ENCODE measurements at regions of chr5 and their contacts with region 1.

Region 1: GRCh38 chr5:138464008-138464387 is 1.3 kb upstream of the EGR1 start:
- DNase-seq: peak; percentile 91
- H3K4me3 Mint-ChIP-seq: peak overlapping the region; percentile 83
- H3K27ac Mint-ChIP-seq: peak overlapping the region; percentile 93
- H3K4me1 Mint-ChIP-seq: peaks cover 55% of the 10 kb centered on the region
- H3K27me3 Mint-ChIP-seq: peaks cover 6% of the 10 kb centered on the region

Region 2: DNA sequence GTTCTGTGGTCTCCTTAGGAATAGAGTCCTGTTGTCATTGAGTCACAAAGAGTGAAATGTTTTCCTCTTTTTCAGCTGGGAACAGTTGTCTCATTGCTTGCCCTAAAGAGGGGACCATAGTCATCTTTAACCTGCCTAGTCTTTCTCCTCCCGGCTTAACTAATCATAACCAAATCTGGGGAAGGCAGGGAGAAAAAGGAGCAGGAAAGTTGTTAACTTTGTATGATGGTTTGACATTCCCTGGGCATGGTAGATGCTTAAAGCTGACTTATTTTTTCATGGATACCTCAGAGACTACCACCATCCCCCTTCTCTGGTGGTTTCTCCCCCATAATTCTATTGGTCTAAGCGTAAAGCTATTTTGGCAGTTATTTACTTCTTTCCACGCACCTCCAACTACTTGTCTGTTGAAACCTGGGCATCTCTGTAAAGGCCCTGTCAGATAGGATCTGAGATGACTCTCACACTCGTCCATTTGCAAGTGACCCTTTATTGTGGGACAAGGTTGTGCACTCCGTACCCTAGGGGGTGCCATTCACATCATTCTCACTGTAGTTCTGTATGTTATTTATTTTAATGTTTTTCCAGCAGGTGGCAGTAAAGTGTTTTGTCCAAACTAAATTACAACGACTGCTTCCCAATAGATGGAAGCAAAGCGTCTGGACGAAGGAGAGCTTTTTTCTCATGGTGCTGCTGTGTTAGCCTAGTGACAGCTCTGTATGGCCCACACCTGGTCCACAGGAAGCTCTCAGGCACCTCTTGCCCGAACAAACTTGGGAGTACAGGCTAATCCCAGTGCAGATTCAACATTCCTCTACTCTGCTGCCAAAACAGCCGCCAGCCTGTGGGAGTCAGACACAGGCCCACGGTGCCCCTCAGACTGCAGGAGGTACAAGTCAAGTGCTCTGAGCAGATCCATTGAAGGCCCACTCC is 428.1 kb before region 1 on chr5:
- intact Hi-C with region 1: loop called (anchors 2 kb)
- DNase-seq: peak; percentile 60
- H3K4me3 Mint-ChIP-seq: peak overlapping the region; percentile 38
- H3K27ac Mint-ChIP-seq: peak overlapping the region; percentile 72
- H3K4me1 Mint-ChIP-seq: peaks cover 46% of the 10 kb centered on the region
- H3K27me3 Mint-ChIP-seq: no peaks in the 10 kb centered on the region

Region 3: GRCh38 chr5:138331449-138332368 is 132.3 kb before region 1 on chr5 and contains the start of gene CDC25C:
- intact Hi-C with region 1: loop called (anchors 1 kb)
- DNase-seq: peak; percentile 97
- H3K4me3 Mint-ChIP-seq: peak within 1 kb of the TSS; percentile 85
- H3K27ac Mint-ChIP-seq: peak within 1 kb of the TSS; percentile 82
- H3K4me1 Mint-ChIP-seq: peaks cover 24% of the 10 kb centered on the region
- H3K27me3 Mint-ChIP-seq: no peaks in the 10 kb centered on the region
- total RNA-seq, gene CDC25C: 5.3 and 5.6 TPM in 2 replicates

Region 4: DNA sequence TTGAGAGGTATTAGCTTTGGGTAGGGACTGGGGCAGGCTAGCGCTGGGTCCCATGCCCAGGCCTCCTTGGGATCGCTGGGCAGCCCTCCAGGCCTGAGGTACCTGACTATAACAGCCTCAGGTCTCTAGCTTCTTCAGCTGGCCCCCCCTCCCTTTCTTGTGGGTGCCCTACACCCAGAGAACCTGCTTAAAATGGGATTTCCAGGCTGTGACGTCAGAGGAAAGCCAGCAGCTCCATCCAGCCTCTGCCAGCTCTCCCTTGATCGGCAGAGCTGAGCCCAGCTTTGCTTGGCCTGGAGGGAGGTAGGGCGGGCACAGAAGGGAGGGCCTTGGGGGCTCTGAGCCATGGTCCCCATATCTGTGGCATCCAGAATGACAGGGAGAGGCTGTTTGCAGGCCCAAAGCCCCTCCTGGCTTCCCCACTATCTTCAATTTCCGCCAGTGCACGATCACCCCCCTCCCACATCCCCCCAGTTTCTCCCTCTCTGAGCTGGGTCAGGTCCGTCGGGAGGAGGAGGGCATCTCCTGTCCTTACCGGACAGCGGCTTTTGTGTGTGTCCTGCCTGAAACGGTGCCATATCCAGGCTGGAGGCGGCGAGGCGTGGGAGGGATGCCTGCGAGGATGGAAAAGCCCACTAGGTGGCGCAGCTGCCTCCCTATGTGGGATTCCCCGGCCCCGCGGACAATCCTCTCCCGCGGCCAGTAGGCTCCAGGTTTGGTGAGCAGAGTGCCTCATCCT is 14.3 kb before region 1 on chr5:
- intact Hi-C with region 1: loop called (anchors 1 kb)
- DNase-seq: peak; percentile 74
- H3K4me3 Mint-ChIP-seq: peak overlapping the region; percentile 24
- H3K27ac Mint-ChIP-seq: peak overlapping the region; percentile 7
- H3K4me1 Mint-ChIP-seq: peaks cover 6% of the 10 kb centered on the region
- H3K27me3 Mint-ChIP-seq: peaks cover 6% of the 10 kb centered on the region

Region 5: DNA sequence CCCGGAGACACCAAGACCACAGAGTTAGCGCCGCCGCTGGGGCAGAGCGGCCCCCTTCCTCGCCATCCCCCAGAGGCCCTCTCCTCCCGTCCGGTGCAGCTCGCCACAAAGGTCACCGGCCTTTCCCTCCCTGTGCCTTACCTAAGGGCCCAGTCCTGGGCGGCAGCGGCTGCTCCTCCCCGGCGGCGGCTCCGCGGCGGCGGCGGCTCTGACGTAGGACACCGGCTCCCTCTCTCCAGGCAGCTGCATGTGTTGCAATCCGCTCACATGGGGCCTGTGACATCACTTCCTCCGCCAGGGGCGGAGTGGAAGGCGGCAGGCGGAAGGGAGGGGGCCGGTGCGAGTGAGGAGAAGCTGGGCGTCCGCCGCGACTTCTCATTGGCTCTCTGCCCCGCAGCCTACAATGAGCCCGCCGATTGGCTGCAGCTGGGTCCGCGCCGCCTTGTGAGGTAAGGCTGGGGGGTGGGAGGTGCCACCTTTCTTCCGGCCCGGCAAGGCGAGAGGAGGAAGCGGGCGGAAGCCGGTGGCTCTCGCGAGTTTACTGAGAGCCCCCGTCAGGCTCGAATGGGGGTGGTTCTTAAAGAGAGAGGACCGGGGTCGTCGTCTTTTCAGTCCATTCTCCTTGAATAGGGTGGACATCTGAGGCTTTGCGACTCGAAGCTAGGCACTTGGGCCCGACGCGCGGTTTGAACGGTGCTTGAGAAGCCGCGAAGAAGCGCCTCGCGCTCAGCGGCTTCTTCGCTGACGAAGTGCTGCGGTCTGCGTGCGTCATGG is 79.1 kb after region 1 on chr5 and contains the start of gene ETF1:
- intact Hi-C with region 1: loop called (anchors 1 kb)
- DNase-seq: peak; percentile 100
- H3K4me3 Mint-ChIP-seq: peak within 1 kb of the TSS; percentile 99
- H3K27ac Mint-ChIP-seq: peak within 1 kb of the TSS; percentile 100
- H3K4me1 Mint-ChIP-seq: peaks cover 54% of the 10 kb centered on the region
- H3K27me3 Mint-ChIP-seq: no peaks in the 10 kb centered on the region
- total RNA-seq, gene ETF1: 201 and 219 TPM in 2 replicates

Region 6: GRCh38 chr5:139293504-139294373 is 829.7 kb after region 1 on chr5 and contains the start of gene MATR3:
- intact Hi-C with region 1: loop called (anchors 5 kb)
- DNase-seq: peak; percentile 88
- H3K4me3 Mint-ChIP-seq: peak within 1 kb of the TSS; percentile 95
- H3K27ac Mint-ChIP-seq: peak within 1 kb of the TSS; percentile 94
- H3K4me1 Mint-ChIP-seq: peaks cover 37% of the 10 kb centered on the region
- H3K27me3 Mint-ChIP-seq: no peaks in the 10 kb centered on the region
- total RNA-seq, gene MATR3: 232 and 258 TPM in 2 replicates

Measured in activated T-helper 1 cell treated with anti-CD3 and anti-CD28 coated beads, Interleukin-12 subunit alpha, Interleukin-12 subunit beta, Interleukin-2, Interleukin-4 antibody, amounts not matched to agents 30 ng/mL and 10 ng/mL and 1 ng/mL, durations not matched to agents 14 hours and 24 hours and 36 hours (primary cell).